Cardiac septum (tissue), 1 donor: ENCODE measurements at regions of chr2 and their contacts with region 1.

Region 1: DNA sequence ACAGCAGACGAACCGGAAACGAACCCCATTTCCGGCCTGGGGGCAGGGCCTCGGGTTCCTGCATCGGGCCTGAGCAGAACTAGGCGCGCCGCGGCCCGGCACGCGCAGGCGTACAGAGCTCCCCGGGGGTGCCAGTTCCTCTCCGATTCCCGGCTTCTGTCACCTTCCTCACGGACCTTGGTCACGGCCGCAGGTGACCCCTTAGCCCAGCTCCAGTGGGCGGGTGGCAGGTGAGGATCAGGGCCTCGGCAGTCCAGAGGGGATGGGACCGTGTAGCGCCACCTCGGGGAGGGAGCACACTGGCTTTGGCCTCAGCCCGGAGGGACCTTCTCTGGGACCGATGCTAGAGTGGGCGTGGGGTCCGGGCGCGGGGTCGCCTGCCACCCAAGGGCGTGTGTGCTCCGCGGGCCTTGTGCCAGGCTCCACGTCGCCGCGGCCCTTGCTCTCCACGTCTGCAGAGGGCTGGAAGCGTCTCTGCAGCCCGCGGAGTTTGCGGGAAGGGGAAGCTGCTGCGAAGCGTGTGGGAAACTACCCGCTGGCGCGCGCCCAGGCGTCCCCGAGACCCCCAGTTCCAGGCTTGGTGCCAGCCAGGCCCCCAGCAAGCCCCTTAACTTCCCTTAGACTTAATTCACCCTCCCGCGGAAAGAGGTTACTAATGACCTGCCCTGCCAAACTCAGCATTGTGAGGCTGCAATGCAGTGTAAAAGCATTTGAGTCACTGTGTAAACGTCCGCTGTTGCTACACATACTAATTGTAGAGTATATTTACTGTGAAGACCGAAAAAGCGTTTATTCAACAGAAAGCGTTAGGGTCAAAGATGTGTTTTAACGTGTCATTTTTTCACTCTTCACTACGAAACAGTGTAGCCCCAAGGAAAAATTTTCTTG is at the start of gene TRAPPC12:
- DNase-seq: peak; percentile 96
- total RNA-seq, gene TRAPPC12: 67.5 TPM

Region 2: DNA sequence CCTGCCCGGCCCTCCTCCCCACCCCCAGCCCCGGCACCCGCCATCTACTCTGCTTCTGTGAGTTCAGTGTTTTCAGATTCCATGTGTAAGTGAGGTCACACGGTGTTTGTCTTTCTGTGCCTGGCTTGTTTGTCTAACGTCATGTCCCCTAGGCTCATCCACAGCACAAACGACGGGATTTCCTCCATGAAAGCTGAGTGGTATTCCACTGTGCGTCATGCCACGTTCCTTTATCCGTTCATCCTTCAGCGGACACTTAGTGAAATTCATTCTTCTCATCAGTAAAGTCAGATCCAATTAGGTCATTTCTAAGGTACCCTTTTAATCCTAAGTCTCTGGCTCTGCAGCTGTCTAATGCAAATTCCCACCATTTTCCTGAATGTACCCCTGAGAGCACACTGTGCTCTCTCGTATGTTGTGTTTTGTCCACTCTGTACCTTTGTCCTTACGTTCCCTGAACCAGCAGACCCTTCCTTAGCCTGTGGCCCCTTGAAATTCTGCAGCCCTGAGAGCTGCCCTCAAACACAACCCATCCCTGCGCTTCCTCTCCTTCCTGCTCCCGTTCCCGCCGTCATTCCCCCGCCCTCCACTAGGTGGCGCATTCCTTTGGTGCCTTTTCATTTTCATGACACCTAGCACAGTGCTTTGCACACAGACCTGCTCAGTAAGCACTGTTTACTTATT is 43.7 kb after region 1 on chr2:
- intact Hi-C with region 1: no loop called
- DNase-seq: peak; percentile 83

Region 3: DNA sequence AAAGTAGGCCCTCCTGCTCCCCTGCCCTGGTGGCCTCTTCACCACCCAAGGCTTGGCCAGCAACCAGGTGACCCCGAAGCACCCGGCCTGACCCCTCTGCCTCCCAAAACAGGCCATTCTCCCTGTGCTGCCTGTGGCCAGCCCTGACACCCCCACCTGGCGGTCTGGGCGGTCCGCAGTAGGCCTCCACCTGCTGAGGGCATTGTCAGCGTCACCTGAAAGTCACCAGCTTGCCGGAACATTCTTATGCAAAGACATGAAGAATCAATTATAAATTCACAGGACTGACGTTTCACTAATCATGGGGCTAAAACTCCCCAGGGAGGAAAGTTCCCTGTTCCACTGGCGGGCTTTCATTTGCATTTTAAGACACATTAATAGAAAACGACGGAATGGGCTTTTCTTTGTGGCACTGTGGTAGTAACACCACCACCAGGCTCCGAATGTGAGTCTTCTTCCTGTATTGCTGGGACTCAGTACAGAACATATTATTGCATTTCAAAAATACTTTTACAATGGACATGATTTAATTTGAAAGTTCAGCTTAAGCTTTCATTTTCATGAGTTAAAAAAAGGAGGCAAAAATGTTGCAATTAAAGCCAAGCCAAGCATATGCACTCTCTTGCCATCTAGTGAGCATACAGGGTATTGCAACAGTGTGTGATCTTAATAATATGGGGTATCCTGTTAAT is 82.1 kb after region 1 on chr2:
- intact Hi-C with region 1: loop called (anchors 5 kb)
- DNase-seq: peak; percentile 63

Region 4: DNA sequence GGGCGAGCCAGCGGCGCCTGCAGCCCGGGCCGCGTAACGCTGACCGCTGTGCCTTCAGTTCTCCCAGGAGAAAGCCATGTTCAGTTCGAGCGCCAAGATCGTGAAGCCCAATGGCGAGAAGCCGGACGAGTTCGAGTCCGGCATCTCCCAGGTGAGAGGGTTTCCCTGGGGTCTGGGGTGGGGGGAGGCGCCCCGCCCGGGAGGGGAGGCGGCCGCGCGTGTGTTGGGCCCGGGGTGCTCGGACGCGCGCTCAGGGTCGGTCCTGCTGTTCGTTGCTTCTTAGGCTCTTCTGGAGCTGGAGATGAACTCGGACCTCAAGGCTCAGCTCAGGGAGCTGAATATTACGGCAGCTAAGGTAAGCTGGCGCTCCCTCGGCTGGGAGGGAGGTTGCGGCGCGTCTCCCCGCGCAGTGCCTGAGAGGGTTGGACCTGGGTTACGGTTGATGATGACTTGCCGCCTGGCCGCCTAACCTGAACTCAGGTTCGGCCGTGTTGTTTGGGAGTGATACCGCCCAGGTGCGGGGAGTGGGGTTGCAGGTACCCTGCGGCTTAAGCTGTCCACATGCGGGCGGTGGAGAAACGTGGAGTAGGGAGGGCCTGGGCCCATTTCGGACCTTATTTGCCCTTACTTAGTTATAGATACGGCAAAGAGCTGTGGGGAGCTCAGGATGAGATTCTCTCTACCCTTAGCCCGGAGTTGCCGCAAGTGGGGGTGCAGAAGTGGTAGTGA is 195.8 kb after region 1 on chr2:
- intact Hi-C with region 1: loop called (anchors 1 kb)
- DNase-seq: no peak

Region 5: GRCh38 chr2:3738454-3738853 is 358.6 kb after region 1 on chr2:
- intact Hi-C with region 1: no loop called
- DNase-seq: no peak